ENCODE measurements at regions of chr9 and their contacts with region 1.

Region 1: DNA sequence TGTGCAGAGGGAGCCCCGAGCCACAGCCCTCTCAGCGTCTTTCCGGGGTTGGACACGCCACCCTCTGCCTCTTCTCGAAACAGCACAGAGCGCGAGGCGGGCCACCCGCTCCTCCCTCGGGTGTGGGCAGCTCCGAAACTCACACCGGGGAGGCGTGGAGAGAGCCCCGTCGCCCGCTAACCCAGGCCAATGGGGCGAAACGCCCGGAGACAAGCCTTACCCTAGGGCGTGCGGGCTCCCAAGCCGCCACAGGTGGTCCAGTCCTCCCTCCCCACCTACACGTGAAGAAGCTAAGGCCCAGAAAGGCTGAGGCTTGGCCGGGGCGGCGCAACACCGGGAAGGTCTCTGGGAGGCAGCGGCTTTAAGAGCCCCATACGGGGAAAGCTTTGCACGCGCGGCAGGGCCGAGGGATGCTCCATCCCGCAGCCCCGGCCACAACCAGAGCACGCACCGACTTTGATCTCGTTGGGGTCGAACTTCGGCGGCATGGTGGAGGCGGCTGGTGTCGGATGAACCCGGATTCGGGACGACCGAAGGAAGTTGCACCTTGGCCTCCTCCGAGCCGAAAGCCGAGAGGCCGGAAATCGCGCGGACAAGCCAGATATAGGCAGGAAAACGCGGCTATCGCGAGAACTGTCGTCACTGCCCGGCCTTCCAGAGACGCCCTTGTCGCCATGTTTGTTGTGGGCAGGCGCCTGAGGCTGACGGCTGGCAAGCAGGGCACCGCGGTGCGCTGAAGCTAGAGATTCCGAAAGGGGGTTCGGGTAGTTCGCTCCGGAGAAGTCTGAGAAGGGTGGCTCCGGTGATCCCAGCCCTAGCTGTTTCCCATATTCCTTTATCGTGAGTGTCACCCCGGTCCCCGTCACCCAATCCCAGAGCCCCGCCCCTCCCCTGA is at the starts of genes LRSAM1 and RPL12:
- DNase-seq: peak; percentile 91 to 100
- H3K4me3 ChIP-seq: peak within 1 kb of the TSS; percentile 85 to 99 (median 88)
- H3K27ac ChIP-seq: peak within 1 kb of the TSS; percentile 86
- H3K4me1 ChIP-seq: peaks cover 0 to 6% (median 4%) of the 10 kb centered on the region in 4 experiments; a peak in 4 of 7 replicates
- H3K27me3 ChIP-seq: no peaks in the 10 kb centered on the region
- CTCF ChIP-seq: no peak
- EP300 ChIP-seq: no peak
- POLR2A ChIP-seq: peak; percentile 100
- RAD21 ChIP-seq: no peak
- total RNA-seq, gene LRSAM1: 18.3 and 18.8 TPM in 2 replicates
- total RNA-seq, gene RPL12: 1,993 and 2,006 TPM in 2 replicates

Region 2: GRCh38 chr9:127353882-127354281 is 97.2 kb before region 1 on chr9:
- CTCF ChIA-PET with region 1: no interaction called
- POLR2A ChIA-PET with region 1: interaction called, 15 read pairs
- DNase-seq: peak; percentile 53 to 63
- H3K4me3 ChIP-seq: peak overlapping the region in 1 of 4 experiments; percentile 20; a peak in 1 of 8 replicates
- H3K27ac ChIP-seq: peak overlapping the region; percentile 65
- H3K4me1 ChIP-seq: peaks cover 7 to 25% (median 15%) of the 10 kb centered on the region in 4 experiments
- H3K27me3 ChIP-seq: no peaks in the 10 kb centered on the region
- CTCF ChIP-seq: no peak
- EP300 ChIP-seq: peak in 1 of 2 experiments; percentile 80; a peak in 1 of 3 replicates
- POLR2A ChIP-seq: peak in 1 of 2 experiments; percentile 70; a peak in 2 of 3 replicates
- RAD21 ChIP-seq: peak in 1 of 2 experiments; percentile 14; a peak in 2 of 4 replicates

Region 3: GRCh38 chr9:127406799-127407509 is 44.1 kb before region 1 on chr9:
- CTCF ChIA-PET with region 1: no interaction called
- POLR2A ChIA-PET with region 1: interaction called, 12 read pairs
- DNase-seq: no peak
- H3K4me3 ChIP-seq: no peak overlapping the region
- H3K27ac ChIP-seq: no peak overlapping the region
- H3K4me1 ChIP-seq: no peaks in the 10 kb centered on the region
- H3K27me3 ChIP-seq: no peaks in the 10 kb centered on the region
- CTCF ChIP-seq: no peak
- EP300 ChIP-seq: no peak
- POLR2A ChIP-seq: no peak
- RAD21 ChIP-seq: no peak

Region 4: GRCh38 chr9:127430415-127430814 is 20.7 kb before region 1 on chr9:
- CTCF ChIA-PET with region 1: no interaction called
- POLR2A ChIA-PET with region 1: interaction called, 125 read pairs
- DNase-seq: no peak
- H3K4me3 ChIP-seq: no peak overlapping the region
- H3K27ac ChIP-seq: no peak overlapping the region
- H3K4me1 ChIP-seq: no peaks in the 10 kb centered on the region
- H3K27me3 ChIP-seq: no peaks in the 10 kb centered on the region
- CTCF ChIP-seq: no peak
- EP300 ChIP-seq: no peak
- POLR2A ChIP-seq: no peak
- RAD21 ChIP-seq: no peak

Region 5: DNA sequence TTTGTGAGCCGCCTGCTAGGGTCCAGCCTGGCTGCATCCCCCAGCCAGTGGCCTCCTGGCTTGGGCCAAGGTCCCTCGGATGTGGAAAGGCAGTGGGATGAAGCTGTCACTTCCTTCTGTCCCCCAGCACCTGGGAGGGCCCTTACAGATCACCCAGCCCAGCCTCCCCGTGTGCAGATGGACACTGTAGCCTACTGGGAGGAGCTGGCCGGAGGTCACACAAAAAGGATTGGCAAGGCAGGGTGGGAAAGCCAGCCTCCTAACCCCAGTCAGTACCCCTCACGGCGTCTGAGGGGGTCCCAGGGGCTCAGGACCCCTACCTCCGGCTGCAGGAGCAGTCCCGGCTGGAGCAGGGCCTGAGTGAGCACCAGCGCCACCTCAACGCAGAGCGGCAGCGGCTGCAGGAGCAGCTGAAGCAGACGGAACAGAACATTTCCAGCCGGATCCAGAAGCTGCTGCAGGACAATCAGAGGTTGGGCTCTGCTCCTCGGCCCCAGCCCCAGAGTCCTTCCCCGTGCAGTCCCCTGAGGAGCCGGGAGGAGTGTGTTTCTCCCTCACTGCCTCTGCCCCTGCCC is 28.5 kb after region 1 on chr9:
- CTCF ChIA-PET with region 1: interaction called, 7 read pairs
- POLR2A ChIA-PET with region 1: interaction called, 16 read pairs
- DNase-seq: no peak
- H3K4me3 ChIP-seq: no peak overlapping the region
- H3K27ac ChIP-seq: no peak overlapping the region
- H3K4me1 ChIP-seq: no peaks in the 10 kb centered on the region
- H3K27me3 ChIP-seq: no peaks in the 10 kb centered on the region
- CTCF ChIP-seq: no peak
- EP300 ChIP-seq: no peak
- POLR2A ChIP-seq: no peak
- RAD21 ChIP-seq: no peak

Region 6: DNA sequence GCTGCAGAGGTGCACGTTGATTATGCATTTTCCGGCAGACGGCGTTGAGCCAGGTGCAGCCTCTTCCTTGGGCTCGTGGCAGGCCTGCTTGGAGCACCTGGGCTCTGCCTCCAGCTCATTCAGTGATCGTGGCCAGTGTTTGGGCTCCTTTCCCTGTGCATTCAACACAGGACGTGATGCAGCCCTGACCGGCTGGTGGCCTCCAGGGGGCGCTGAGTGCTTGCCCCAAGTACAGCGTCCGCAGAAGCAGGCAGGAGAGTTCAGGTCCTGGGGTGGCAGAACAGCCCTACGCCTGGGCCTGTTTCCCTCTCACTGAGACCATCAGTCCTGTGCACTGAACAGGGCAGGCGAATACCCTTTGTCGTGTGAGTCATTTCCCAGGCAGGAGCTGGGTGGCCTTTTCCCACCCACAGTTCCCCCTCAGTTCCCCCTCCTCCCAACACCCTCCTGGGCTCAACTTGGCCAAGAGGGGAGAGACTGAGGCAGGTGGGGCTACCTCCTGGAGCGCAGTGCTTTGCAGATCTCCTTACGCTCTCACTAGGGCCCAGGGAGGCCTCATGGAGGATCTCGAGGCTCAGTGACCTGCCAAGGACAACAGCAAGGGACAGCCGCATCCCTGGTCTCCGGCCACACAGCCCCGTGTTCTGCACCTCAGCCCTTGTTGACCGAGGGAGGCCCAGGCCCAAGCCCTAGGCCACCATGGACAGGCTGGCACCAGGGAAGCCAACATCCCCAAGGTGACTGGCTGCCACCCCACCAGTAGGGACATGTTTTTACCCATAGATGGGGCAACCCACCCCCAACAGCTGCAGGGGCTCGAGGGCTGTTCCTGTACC is 53.1 kb after region 1 on chr9:
- CTCF ChIA-PET with region 1: interaction called, 4 read pairs
- POLR2A ChIA-PET with region 1: interaction called, 13 read pairs
- DNase-seq: peak; percentile 88 to 92
- H3K4me3 ChIP-seq: no peak overlapping the region
- H3K27ac ChIP-seq: 0 out of 2 replicates have a peak overlapping the region, but pooled peaks have one; percentile 45
- H3K4me1 ChIP-seq: peaks cover 0 to 3% (median 0%) of the 10 kb centered on the region in 4 experiments; a peak in 2 of 7 replicates
- H3K27me3 ChIP-seq: no peaks in the 10 kb centered on the region
- CTCF ChIP-seq: peak in 2 of 3 experiments; percentile 98 to 99; a peak in 3 of 4 replicates
- EP300 ChIP-seq: no peak
- POLR2A ChIP-seq: no peak
- RAD21 ChIP-seq: peak; percentile 93 to 96

Region 7: GRCh38 chr9:127611899-127612790 is 161.1 kb after region 1 on chr9 and contains the start of gene STXBP1:
- CTCF ChIA-PET with region 1: no interaction called
- POLR2A ChIA-PET with region 1: interaction called, 18 read pairs
- DNase-seq: peak in 1 of 2 experiments; percentile 91
- H3K4me3 ChIP-seq: peak within 1 kb of the TSS; percentile 70 to 94 (median 80)
- H3K27ac ChIP-seq: no peak within 1 kb of the TSS
- H3K4me1 ChIP-seq: peaks cover 0 to 18% (median 8%) of the 10 kb centered on the region in 4 experiments; a peak in 5 of 7 replicates
- H3K27me3 ChIP-seq: peaks cover 0 to 13% (median 6%) of the 10 kb centered on the region in 4 experiments; a peak in 4 of 7 replicates
- CTCF ChIP-seq: 0 out of 4 replicates have a peak, but pooled peaks of 1 of the 3 experiments have one; percentile 6
- EP300 ChIP-seq: no peak
- POLR2A ChIP-seq: peak; percentile 39 to 62
- RAD21 ChIP-seq: peak in 1 of 2 experiments; percentile 11; a peak in 2 of 4 replicates
- total RNA-seq, gene STXBP1: 60.9 and 61.9 TPM in 2 replicates